GM12878 (cell line): ENCODE measurements at regions of chr18 and their contacts with region 1.

Region 1: DNA sequence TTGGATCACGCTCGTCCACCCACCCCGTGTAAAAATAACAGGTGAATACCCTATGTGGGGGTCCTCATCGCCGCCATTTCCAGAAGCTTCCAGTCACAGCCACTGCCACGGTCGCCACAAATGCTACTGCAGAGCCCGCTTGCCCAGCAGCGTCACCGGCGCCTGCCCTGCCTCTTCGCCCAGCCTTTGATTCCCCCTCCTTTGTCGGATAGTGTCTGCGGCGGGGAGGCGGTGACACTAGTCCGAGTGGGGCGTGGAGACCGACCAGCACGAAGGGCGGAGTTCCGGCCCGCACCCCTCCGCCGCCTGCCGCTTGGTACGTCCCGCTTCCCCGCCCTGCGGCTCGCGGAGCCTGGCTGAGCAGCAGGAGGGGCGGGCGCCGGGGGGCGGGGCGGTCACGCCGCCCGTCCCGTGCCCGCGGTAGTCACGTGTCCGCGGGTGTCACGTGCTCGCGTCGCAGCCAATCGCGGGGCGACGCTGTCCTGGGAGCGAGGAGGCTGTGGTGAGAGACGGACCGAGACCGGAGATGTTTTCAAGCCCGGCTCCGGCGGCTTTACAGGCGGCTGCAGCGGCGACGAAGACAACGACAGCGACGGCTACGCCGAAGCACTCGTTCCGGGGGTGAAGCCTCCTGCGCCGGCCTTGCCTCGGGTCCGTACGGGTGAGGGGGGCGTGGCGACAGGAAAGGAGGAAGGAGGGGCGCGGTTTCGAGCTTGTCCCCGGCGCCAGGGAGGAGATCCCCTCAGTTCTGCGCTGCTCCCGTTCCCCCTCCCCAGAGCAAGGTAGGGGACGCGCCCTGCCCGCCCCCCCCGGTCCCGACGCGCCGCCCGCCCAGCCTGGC is at the start of gene ANKRD12:
- DNase-seq: peak; percentile 89
- ATAC-seq: peak; percentile 86
- H3K4me3 ChIP-seq: peak within 1 kb of the TSS; percentile 92
- H3K27ac ChIP-seq: peak within 1 kb of the TSS; percentile 80
- H3K4me1 ChIP-seq: no peaks in the 10 kb centered on the region; the same call in 1 of the 2 replicates
- H3K27me3 ChIP-seq: no peaks in the 10 kb centered on the region
- CTCF ChIP-seq: no peak
- EP300 ChIP-seq: 0 out of 4 replicates have a peak, but pooled peaks of 1 of the 2 experiments have one; percentile 16
- POLR2A ChIP-seq: peak; percentile 90
- RAD21 ChIP-seq: no peak
- polyA plus RNA-seq, gene ANKRD12: 20.0 to 20.3 TPM

Region 2: GRCh38 chr18:9082711-9083510 is 53.6 kb before region 1 on chr18:
- CTCF ChIA-PET with region 1: interaction called, 18 read pairs
- POLR2A ChIA-PET with region 1: interaction called, 5 read pairs
- RAD21 ChIA-PET with region 1: interaction called, 20 read pairs
- SMC1A ChIA-PET with region 1: interaction called, 45 read pairs
- in situ Hi-C with region 1: no loop called
- intact Hi-C with region 1: no loop called
- DNase-seq: peak; percentile 68
- ATAC-seq: peak; percentile 98
- H3K4me3 ChIP-seq: peak overlapping the region; percentile 43
- H3K27ac ChIP-seq: peak overlapping the region; percentile 54
- H3K4me1 ChIP-seq: peaks cover 11% of the 10 kb centered on the region; the same call in 1 of the 2 replicates
- H3K27me3 ChIP-seq: no peaks in the 10 kb centered on the region
- CTCF ChIP-seq: no peak; a peak in 1 of 6 replicates
- EP300 ChIP-seq: peak; percentile 16 to 55; a peak in 2 of 4 replicates
- POLR2A ChIP-seq: no peak
- RAD21 ChIP-seq: peak; percentile 48

Region 3: DNA sequence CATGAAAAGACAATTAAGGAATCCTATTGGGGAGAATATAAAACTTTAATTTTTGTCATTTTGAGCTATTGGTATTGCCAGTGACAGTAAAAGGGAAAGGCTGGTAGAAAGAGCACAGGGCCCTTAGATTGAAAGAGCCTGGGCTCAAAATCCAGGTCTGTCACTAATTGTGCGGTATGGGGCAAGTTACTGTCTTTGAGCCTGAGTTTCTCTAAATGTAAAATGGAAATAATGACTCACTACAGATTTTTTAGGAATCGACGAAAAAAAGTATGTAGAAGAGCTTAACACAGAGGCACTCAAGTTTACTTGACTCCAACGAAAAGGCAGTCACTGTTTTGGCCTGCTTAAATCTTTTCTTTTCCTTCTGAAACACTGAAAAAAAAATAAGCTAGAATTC is 27.0 kb before region 1 on chr18:
- CTCF ChIA-PET with region 1: interaction called, 95 read pairs
- POLR2A ChIA-PET with region 1: interaction called, 85 read pairs
- RAD21 ChIA-PET with region 1: interaction called, 73 read pairs
- SMC1A ChIA-PET with region 1: interaction called, 137 read pairs
- in situ Hi-C with region 1: no loop called
- intact Hi-C with region 1: no loop called
- DNase-seq: no peak
- ATAC-seq: no peak
- H3K4me3 ChIP-seq: peak overlapping the region; percentile 44; the same call in 1 of the 2 replicates
- H3K27ac ChIP-seq: no peak overlapping the region; the same call in 1 of the 2 replicates
- H3K4me1 ChIP-seq: peaks cover 9% of the 10 kb centered on the region
- H3K27me3 ChIP-seq: no peaks in the 10 kb centered on the region
- CTCF ChIP-seq: no peak
- EP300 ChIP-seq: no peak
- POLR2A ChIP-seq: no peak
- RAD21 ChIP-seq: no peak

Region 4: GRCh38 chr18:9126337-9126736 is 10.2 kb before region 1 on chr18:
- CTCF ChIA-PET with region 1: interaction called, 5 read pairs
- POLR2A ChIA-PET with region 1: interaction called, 11 read pairs
- RAD21 ChIA-PET with region 1: interaction called, 4 read pairs
- SMC1A ChIA-PET with region 1: interaction called, 11 read pairs
- in situ Hi-C with region 1: no loop called
- intact Hi-C with region 1: no loop called
- DNase-seq: no peak
- ATAC-seq: no peak
- H3K4me3 ChIP-seq: no peak overlapping the region
- H3K27ac ChIP-seq: no peak overlapping the region
- H3K4me1 ChIP-seq: no peaks in the 10 kb centered on the region
- H3K27me3 ChIP-seq: no peaks in the 10 kb centered on the region
- CTCF ChIP-seq: no peak
- EP300 ChIP-seq: no peak
- POLR2A ChIP-seq: no peak
- RAD21 ChIP-seq: no peak

Region 5: DNA sequence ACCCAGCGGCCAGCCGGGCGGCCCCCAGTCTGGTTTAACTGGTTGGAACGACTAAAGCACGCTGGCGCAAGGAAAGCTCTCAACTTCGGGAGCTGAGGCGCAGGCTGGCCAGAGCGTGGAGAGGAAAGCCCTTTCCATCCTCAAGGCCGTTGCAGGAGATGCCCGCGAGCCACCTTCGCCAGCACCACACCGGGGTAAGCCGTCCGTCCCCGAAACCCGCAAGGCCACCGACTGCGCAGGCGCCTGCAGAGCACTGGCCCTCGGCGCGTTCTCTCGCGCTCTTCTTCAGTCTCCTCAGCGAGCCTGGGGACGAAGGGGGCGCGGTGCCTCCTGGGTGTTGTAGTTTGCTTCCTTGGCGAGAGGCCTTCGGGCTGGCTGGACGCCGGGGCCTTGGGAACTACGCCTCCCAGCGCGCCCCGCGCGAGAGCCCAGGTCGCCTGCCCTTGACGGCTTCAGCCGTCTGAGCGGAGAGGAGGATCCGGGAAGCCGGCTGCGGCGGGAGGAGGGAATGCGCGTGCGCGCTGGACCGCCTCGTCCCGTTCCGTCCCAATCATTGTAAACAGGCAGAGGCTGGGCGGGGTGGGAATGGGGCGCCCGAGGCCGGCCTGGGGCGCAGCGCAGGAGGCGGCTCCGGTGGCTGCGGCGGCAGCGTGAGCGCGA is 338.6 kb after region 1 on chr18 and contains the start of gene RALBP1:
- CTCF ChIA-PET with region 1: no interaction called
- POLR2A ChIA-PET with region 1: interaction called, 3 read pairs
- RAD21 ChIA-PET with region 1: no interaction called
- SMC1A ChIA-PET with region 1: no interaction called
- in situ Hi-C with region 1: no loop called
- intact Hi-C with region 1: loop called (anchors 5 kb)
- DNase-seq: peak; percentile 94
- ATAC-seq: peak; percentile 96
- H3K4me3 ChIP-seq: peak within 1 kb of the TSS; percentile 97
- H3K27ac ChIP-seq: peak within 1 kb of the TSS; percentile 83
- H3K4me1 ChIP-seq: peaks cover 11% of the 10 kb centered on the region
- H3K27me3 ChIP-seq: no peaks in the 10 kb centered on the region; a peak in 1 of 4 replicates
- CTCF ChIP-seq: peak in 1 of 3 experiments; percentile 39; a peak in 2 of 6 replicates
- EP300 ChIP-seq: no peak
- POLR2A ChIP-seq: peak; percentile 82
- RAD21 ChIP-seq: peak; percentile 47
- polyA plus RNA-seq, gene RALBP1: 11.2 to 17.9 TPM